Right ventricle myocardium superior (tissue), 1 donor: ENCODE measurements at regions of chr1 and their contacts with region 1.

Region 1: GRCh38 chr1:94854458-94855306 is 34.5 kb downstream of the SLC44A3 start:
- DNase-seq: peak; percentile 89
- ATAC-seq: peak; percentile 93

Region 2: DNA sequence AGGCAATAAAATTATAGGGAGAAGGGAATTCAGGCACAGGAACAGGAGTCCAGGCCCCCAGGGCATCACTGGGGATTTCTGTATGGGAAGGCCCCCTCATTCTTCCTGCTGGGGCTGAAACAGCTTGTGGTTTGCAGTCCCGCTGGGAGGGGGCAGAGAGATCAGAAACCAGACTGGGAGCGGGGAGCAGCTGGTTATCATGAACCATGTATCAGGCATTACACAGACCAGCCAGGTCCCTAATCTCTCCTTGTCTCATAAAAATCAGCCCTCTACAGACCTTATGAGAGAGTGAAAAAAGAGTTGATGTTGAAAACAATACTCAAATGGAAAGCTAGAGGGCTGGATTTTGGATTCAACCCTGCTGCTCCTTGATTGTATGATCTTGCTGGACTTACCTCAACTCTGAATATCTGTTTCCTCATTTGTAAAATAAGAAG is 219.7 kb before region 1 on chr1:
- intact Hi-C with region 1: no loop called
- DNase-seq: no peak
- ATAC-seq: no peak

Region 3: GRCh38 chr1:95043141-95043980 is 188.7 kb after region 1 on chr1:
- intact Hi-C with region 1: loop called (anchors 1 kb)
- DNase-seq: peak; percentile 88
- ATAC-seq: peak; percentile 90